ENCODE measurements at regions of chr20 and their contacts with region 1.

Region 1: GRCh38 chr20:13105864-13106457 is 97.2 kb downstream of the SPTLC3 start:
- DNase-seq: peak; percentile 4
- H3K4me3 ChIP-seq: no peak overlapping the region
- CTCF ChIP-seq: peak; percentile 33

Region 2: DNA sequence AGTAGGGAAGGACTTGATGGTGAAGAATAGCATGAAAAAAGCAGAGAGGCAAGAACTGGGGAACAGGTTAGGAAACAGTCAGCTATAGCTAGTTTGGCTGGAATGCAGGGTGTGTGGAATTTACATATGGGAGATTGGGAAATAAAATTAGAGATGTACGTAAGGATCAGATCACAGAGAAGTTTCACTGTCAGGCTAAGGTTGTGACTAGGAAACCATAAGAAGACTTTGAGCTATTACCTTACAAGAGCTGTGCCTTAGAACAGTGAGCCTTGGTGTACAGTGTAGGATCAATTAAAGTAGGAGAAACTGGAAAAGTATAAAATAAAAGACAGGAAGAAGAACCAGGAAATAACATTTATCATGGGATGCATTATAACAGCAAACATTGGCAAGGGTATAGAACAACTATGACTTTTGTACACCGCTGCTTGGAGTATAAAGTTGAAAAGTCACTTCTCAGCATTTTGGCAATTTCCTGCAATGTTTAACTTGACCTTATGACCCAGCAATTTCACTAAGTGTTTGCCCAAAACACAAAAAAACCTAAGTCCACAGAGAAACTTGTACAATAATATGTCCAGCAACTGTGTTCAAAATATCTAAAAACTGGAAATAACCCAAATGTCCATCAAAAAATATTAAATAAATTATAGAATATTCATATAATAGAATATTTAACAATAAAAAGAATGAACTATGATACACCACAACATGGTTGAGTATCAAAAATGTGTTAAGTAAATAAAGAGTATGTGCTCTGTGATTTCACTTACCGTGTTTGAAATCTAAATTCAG is 128.4 kb before region 1 on chr20:
- CTCF ChIA-PET with region 1: interaction called, 142 read pairs
- POLR2A ChIA-PET with region 1: no interaction called
- DNase-seq: no peak
- H3K4me3 ChIP-seq: no peak overlapping the region
- CTCF ChIP-seq: no peak